ENCODE measurements at regions of chr7 and their contacts with region 1.

Region 1: GRCh38 chr7:139680676-139681462 is 96.9 kb downstream of the HIPK2 start:
- DNase-seq: peak; percentile 94
- ATAC-seq: peak; percentile 73
- H3K4me3 Mint-ChIP-seq: peak overlapping the region; percentile 68
- H3K27ac Mint-ChIP-seq: peak overlapping the region; percentile 98
- H3K4me1 Mint-ChIP-seq: peaks cover 53% of the 10 kb centered on the region
- H3K27me3 Mint-ChIP-seq: no peaks in the 10 kb centered on the region

Region 2: DNA sequence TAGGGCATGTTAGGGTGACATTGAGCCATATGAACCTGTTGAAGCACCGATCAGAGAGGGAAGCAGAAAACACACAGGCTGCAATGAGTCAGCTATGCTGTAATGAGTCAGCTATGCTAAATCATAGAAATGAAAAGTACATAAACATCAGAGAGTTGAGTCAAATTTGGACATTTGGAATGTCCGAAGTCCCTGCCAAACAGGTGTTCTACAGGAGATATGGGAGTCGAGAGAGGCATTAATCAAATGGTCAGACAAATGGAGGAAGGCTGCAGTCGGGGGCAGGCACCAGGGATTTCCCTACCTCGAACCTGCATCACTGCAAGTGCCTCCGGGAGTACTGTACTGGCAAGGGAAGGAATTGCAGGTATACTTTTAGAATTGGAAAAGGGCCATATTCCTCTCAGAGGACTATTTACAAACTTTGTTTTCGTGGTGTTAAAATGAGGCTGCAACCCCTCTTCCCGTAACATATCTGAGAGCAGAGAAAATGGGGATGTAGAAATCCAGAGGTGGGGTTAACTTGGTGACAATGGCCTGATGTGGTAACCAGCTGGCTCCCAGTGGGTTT is 562.5 kb before region 1 on chr7:
- CTCF ChIA-PET with region 1: no interaction called
- POLR2A ChIA-PET with region 1: no interaction called
- intact Hi-C with region 1: loop called in 1 of 2 experiments (anchors 10 kb)
- DNase-seq: peak; percentile 67
- ATAC-seq: peak; percentile 91
- H3K4me3 Mint-ChIP-seq: peak overlapping the region; percentile 27
- H3K27ac Mint-ChIP-seq: peak overlapping the region; percentile 48
- H3K4me1 Mint-ChIP-seq: peaks cover 31% of the 10 kb centered on the region
- H3K27me3 Mint-ChIP-seq: no peaks in the 10 kb centered on the region

Region 3: GRCh38 chr7:139737221-139738100 is 56.6 kb after region 1 on chr7:
- CTCF ChIA-PET with region 1: no interaction called
- POLR2A ChIA-PET with region 1: interaction called, 4 read pairs
- intact Hi-C with region 1: loop called in 1 of 2 experiments (anchors 5 kb)
- DNase-seq: peak; percentile 68
- ATAC-seq: peak; percentile 96
- H3K4me3 Mint-ChIP-seq: peak overlapping the region; percentile 49
- H3K27ac Mint-ChIP-seq: peak overlapping the region; percentile 88
- H3K4me1 Mint-ChIP-seq: peaks cover 71% of the 10 kb centered on the region
- H3K27me3 Mint-ChIP-seq: no peaks in the 10 kb centered on the region

Region 4: GRCh38 chr7:139950848-139951512 is 270.1 kb after region 1 on chr7:
- CTCF ChIA-PET with region 1: no interaction called
- POLR2A ChIA-PET with region 1: no interaction called
- intact Hi-C with region 1: no loop called
- DNase-seq: no peak
- ATAC-seq: no peak
- H3K4me3 Mint-ChIP-seq: no peak overlapping the region
- H3K27ac Mint-ChIP-seq: no peak overlapping the region
- H3K4me1 Mint-ChIP-seq: no peaks in the 10 kb centered on the region
- H3K27me3 Mint-ChIP-seq: no peaks in the 10 kb centered on the region